Activated T-helper 2 cell treated with anti-CD3 and anti-CD28 coated beads, Interferon-gamma antibody, Interleukin-2, Interleukin-4, amounts not matched to agents 10 μg/mL and 5 μg/mL and 100 μg/mL, durations not matched to agents 14 hours and 24 hours and 36 hours (primary cell): ENCODE measurements at regions of chr6 and their contacts with region 1.

Region 1: GRCh38 chr6:35522660-35523658 is 10.3 kb upstream of the TULP1 start:
- DNase-seq: peak; percentile 64
- H3K4me3 Mint-ChIP-seq: peak overlapping the region; percentile 72
- H3K27ac Mint-ChIP-seq: peak overlapping the region; percentile 28
- H3K4me1 Mint-ChIP-seq: peaks cover 8% of the 10 kb centered on the region
- H3K27me3 Mint-ChIP-seq: peaks cover 3% of the 10 kb centered on the region

Region 2: DNA sequence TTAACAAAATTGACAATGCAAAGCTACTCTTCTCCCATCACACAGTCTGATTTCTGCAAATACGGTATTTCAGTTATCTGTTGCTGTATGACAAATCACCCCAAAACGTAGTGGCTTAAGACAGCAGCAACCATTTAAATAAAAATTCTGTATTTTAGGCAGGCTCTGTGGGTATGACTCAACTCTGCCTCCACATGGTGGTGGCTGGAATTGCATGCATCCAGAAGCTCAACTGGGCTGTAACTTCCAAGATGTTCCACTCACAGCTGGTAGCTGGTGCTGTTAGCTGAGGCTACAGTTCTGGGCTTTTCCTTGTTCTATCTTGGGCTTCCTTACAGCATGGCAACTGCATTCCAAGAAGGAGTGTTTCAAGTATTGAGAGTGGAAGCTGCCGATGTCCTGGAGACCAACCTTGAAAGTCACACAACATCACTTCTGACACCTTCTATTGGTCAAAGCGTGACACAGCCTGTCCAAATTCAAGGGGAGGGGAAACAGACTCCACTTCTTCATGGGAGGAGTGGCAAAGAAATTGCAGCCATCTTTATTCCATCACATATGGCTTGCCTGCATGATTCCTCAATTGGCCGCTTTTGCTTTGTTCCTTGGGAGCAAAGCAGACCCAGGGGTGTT is 29.4 kb after region 1 on chr6:
- intact Hi-C with region 1: loop called (anchors 2 kb)
- DNase-seq: peak; percentile 41
- H3K4me3 Mint-ChIP-seq: no peak overlapping the region
- H3K27ac Mint-ChIP-seq: no peak overlapping the region
- H3K4me1 Mint-ChIP-seq: no peaks in the 10 kb centered on the region
- H3K27me3 Mint-ChIP-seq: peaks cover 8% of the 10 kb centered on the region

Region 3: DNA sequence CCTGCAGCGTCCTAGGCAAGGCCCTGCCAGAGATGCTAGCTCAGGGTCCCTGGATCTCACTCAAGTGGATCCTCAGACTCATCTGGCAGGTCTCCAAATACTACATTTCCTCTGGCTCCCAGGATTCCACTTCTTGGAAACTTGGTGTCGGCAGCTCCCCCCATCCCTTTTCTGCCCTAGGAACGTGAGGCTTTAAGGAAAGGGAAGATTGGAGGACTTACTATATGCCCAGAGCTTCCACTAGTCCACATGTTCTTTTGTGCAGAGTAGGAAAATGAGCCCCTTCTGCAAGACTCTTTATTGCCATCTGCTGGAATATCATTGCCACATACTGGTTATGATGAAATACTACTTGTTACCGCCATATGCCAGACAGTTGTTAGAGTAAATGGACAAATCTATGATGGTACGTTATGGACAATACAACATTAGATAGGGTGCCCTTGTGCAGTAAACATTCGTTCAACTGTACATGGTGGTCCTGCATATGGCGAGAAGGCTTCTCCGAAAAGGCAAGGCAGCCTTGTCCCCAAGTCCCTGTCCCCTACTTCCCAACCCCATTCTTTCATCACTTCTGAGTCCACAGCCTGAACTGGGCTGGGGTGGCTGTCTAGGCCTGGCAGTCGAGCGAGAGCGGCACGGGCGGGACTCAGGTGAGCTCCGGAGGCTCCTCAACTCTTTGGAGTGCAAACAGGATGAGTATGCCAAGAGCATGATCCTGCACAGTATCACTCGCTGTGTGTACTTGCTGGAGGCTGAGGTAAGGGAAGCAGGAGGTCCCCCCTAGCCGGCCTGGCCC is 214.7 kb after region 1 on chr6:
- intact Hi-C with region 1: loop called (anchors 1 kb)
- DNase-seq: no peak
- H3K4me3 Mint-ChIP-seq: no peak overlapping the region
- H3K27ac Mint-ChIP-seq: peak overlapping the region; percentile 44
- H3K4me1 Mint-ChIP-seq: peaks cover 26% of the 10 kb centered on the region
- H3K27me3 Mint-ChIP-seq: no peaks in the 10 kb centered on the region

Region 4: DNA sequence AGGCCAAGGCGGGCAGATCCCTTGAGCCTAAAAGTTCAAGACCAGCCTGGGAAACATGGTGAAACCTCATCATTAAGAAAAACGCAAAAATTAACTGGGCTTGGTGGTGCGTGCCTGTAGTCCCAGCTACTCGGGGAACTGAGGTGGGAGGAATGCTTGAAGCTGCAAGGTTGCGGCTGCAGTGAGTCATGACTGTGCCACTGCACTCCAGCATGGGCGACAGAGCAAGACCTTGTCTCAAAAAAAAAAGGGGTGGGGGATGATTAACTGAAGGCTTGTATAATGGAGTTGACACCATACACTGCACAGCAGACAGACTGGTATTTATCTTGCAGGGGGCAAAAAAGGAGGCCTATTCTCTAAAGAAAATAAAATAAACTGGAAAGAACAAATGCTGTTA is 370.3 kb after region 1 on chr6:
- intact Hi-C with region 1: no loop called
- DNase-seq: no peak
- H3K4me3 Mint-ChIP-seq: no peak overlapping the region
- H3K27ac Mint-ChIP-seq: no peak overlapping the region
- H3K4me1 Mint-ChIP-seq: peaks cover 18% of the 10 kb centered on the region
- H3K27me3 Mint-ChIP-seq: no peaks in the 10 kb centered on the region

Region 5: GRCh38 chr6:35943056-35943789 is 420.3 kb after region 1 on chr6:
- intact Hi-C with region 1: no loop called
- DNase-seq: no peak
- H3K4me3 Mint-ChIP-seq: no peak overlapping the region
- H3K27ac Mint-ChIP-seq: no peak overlapping the region
- H3K4me1 Mint-ChIP-seq: no peaks in the 10 kb centered on the region
- H3K27me3 Mint-ChIP-seq: no peaks in the 10 kb centered on the region